ENCODE measurements at regions of chr6 and their contacts with region 1.

Region 1: GRCh38 chr6:159080217-159080976 is 35.6 kb upstream of the TAGAP start:
- DNase-seq: no peak
- ATAC-seq: no peak
- H3K4me3 ChIP-seq: no peak overlapping the region
- H3K27ac ChIP-seq: no peak overlapping the region
- H3K4me1 ChIP-seq: peaks cover 2% of the 10 kb centered on the region; the same call in 1 of the 2 replicates
- H3K27me3 ChIP-seq: peaks cover 20% of the 10 kb centered on the region
- CTCF ChIP-seq: no peak
- POLR2A ChIP-seq: no peak
- RAD21 ChIP-seq: no peak

Region 2: DNA sequence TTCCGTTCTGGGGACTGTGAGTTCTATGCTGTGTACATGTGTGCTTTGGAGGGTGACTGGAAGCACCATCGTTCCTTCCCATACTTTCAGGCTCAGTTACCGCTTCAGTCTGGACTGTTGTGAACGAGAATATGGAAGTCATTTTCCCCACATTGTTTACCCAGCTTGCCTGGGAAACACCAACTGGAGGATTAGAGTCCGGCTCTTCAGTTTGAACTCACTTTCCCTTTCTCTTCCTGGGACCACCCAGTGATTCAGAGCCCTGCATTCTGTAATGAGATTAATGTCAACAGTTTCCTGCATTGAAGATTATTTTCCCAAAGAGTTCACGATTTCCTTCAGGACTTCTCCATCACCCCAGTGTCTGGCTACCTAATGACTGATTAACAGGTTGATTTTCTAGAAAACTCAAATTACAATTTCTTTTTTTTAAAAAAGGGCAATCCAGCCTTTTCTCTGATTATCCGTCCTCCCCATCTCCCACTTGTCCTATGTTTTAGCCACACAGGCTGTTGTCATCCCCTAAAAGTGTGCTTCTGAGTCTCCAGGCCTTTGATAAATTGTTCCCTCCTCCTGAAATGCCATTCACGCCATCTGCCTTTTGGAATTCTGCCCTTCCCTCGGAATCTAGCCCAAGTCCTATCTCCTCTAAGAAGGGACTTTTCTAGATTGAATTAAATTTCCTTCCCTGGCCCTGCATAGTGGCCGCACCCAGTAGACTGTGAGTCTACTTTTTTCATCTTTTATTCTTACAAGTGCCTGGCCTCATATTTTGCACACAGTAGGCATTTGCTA is 32.3 kb before region 1 on chr6:
- CTCF ChIA-PET with region 1: no interaction called
- POLR2A ChIA-PET with region 1: no interaction called
- dilution Hi-C with region 1: no loop called
- in situ Hi-C with region 1: no loop called
- intact Hi-C with region 1: loop called (anchors 2 kb)
- DNase-seq: no peak
- ATAC-seq: no peak
- H3K4me3 ChIP-seq: no peak overlapping the region
- H3K27ac ChIP-seq: no peak overlapping the region
- H3K4me1 ChIP-seq: no peaks in the 10 kb centered on the region
- H3K27me3 ChIP-seq: peaks cover 34% of the 10 kb centered on the region
- CTCF ChIP-seq: no peak
- POLR2A ChIP-seq: no peak
- RAD21 ChIP-seq: no peak

Region 3: GRCh38 chr6:159252955-159253508 is 172.6 kb after region 1 on chr6:
- CTCF ChIA-PET with region 1: no interaction called
- POLR2A ChIA-PET with region 1: no interaction called
- dilution Hi-C with region 1: no loop called
- in situ Hi-C with region 1: no loop called
- intact Hi-C with region 1: no loop called
- DNase-seq: peak; percentile 45
- ATAC-seq: peak; percentile 94
- H3K4me3 ChIP-seq: no peak overlapping the region
- H3K27ac ChIP-seq: no peak overlapping the region
- H3K4me1 ChIP-seq: no peaks in the 10 kb centered on the region
- H3K27me3 ChIP-seq: no peaks in the 10 kb centered on the region
- CTCF ChIP-seq: peak; percentile 51
- POLR2A ChIP-seq: no peak
- RAD21 ChIP-seq: peak; percentile 27; the same call in 1 of the 2 replicates

Region 4: DNA sequence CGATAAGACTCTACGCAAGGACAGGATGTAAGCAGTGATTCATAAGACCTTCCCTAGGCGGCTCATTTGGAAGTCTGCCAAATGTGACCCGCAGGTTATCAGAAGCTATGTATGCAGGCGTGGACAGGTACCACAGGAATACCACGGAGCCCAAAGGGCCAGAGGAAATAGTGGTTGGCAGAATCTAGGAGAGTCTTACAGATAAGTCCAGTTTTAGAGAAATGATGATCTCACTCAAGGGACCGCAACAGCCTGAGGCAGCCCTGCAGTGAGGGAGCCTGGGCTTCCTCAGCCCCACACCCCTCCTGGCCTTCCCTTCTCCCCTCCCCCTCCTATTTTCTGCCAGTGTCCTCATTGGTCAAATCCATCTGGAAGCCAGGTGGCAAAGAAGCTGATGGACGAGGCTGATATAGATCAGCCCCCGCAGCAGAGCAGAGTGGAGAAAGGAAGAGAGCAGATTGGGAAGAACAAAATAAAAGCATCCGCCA is 199.4 kb after region 1 on chr6:
- CTCF ChIA-PET with region 1: no interaction called
- POLR2A ChIA-PET with region 1: interaction called, 21 read pairs
- dilution Hi-C with region 1: no loop called
- in situ Hi-C with region 1: no loop called
- intact Hi-C with region 1: no loop called
- DNase-seq: no peak
- ATAC-seq: no peak
- H3K4me3 ChIP-seq: no peak overlapping the region
- H3K27ac ChIP-seq: no peak overlapping the region
- H3K4me1 ChIP-seq: no peaks in the 10 kb centered on the region
- H3K27me3 ChIP-seq: no peaks in the 10 kb centered on the region
- CTCF ChIP-seq: no peak
- POLR2A ChIP-seq: no peak
- RAD21 ChIP-seq: no peak